AG04450 (cell line): ENCODE measurements at regions of chr4 and their contacts with region 1.

Region 1: GRCh38 chr4:8468746-8469535 is 28.4 kb downstream of the TRMT44 start:
- DNase-seq: peak; percentile 26
- H3K4me3 ChIP-seq: no peak overlapping the region
- H3K27ac ChIP-seq: no peak overlapping the region
- H3K27me3 ChIP-seq: no peaks in the 10 kb centered on the region
- CTCF ChIP-seq: peak; percentile 99

Region 2: GRCh38 chr4:8351931-8352367 is 117.0 kb before region 1 on chr4:
- CTCF ChIA-PET with region 1: no interaction called
- POLR2A ChIA-PET with region 1: no interaction called
- DNase-seq: peak; percentile 20
- H3K4me3 ChIP-seq: no peak overlapping the region
- H3K27ac ChIP-seq: no peak overlapping the region
- H3K27me3 ChIP-seq: peaks cover 13% of the 10 kb centered on the region
- CTCF ChIP-seq: no peak

Region 3: DNA sequence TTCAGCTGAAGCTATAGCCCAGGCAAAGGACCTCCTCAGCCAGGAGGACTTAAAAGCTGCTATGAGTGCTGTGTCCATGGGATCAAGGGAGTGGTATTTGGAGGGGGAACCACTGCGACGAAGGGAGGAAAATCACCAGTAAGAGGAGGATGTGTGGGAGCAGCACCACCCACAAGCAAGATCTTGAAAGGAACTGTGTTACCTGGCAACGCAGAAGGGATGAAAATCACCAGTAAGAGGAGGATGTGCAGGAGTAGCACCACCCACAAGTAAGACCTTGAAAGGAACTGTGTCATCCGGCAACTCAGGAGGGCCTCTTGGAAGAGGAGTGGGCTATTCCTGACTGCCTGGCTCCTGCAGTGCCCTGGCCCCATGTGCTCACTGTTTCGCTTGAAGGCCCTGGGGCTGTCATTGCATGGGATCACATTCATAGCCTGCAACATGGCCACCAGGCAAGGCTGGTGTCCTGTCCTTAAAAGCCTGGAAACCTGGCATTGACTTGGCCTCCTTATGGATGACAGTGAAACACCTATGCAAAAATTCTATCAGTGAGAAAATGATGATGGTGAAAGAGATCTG is 19.9 kb after region 1 on chr4:
- CTCF ChIA-PET with region 1: no interaction called
- POLR2A ChIA-PET with region 1: no interaction called
- DNase-seq: no peak
- H3K4me3 ChIP-seq: no peak overlapping the region
- H3K27ac ChIP-seq: no peak overlapping the region
- H3K27me3 ChIP-seq: peaks cover 12% of the 10 kb centered on the region
- CTCF ChIP-seq: no peak

Region 4: GRCh38 chr4:8594097-8595038 is 125.4 kb after region 1 on chr4:
- CTCF ChIA-PET with region 1: interaction called, 14 read pairs
- POLR2A ChIA-PET with region 1: interaction called, 4 read pairs
- DNase-seq: peak; percentile 33
- H3K4me3 ChIP-seq: peak overlapping the region; percentile 65; the same call in 1 of the 2 replicates
- H3K27ac ChIP-seq: no peak overlapping the region
- H3K27me3 ChIP-seq: peaks cover 50% of the 10 kb centered on the region
- CTCF ChIP-seq: peak; percentile 81

Region 5: GRCh38 chr4:8607603-8608481 is 138.9 kb after region 1 on chr4:
- CTCF ChIA-PET with region 1: interaction called, 12 read pairs
- POLR2A ChIA-PET with region 1: no interaction called
- DNase-seq: no peak
- H3K4me3 ChIP-seq: no peak overlapping the region
- H3K27ac ChIP-seq: no peak overlapping the region
- H3K27me3 ChIP-seq: peaks cover 8% of the 10 kb centered on the region
- CTCF ChIP-seq: peak; percentile 86

Region 6: GRCh38 chr4:8705161-8706145 is 236.5 kb after region 1 on chr4:
- CTCF ChIA-PET with region 1: no interaction called
- POLR2A ChIA-PET with region 1: no interaction called
- DNase-seq: no peak
- H3K4me3 ChIP-seq: no peak overlapping the region
- H3K27ac ChIP-seq: no peak overlapping the region
- H3K27me3 ChIP-seq: no peaks in the 10 kb centered on the region
- CTCF ChIP-seq: no peak